Kidney (tissue), 22 donors: ENCODE measurements at regions of chr7 and their contacts with region 1.

Region 1: GRCh38 chr7:121366852-121367431 is 29.2 kb downstream of the FAM3C start:
- DNase-seq: peak in 2 of 5 donors; percentile 38 to 51
- H3K4me3 ChIP-seq: no peak overlapping the region
- H3K27ac ChIP-seq: no peak overlapping the region
- H3K4me1 ChIP-seq: peaks cover 0 to 4% (median 0%) of the 10 kb centered on the region in 3 donors
- H3K27me3 ChIP-seq: no peaks in the 10 kb centered on the region
- CTCF ChIP-seq: peak; percentile 70

Region 2: DNA sequence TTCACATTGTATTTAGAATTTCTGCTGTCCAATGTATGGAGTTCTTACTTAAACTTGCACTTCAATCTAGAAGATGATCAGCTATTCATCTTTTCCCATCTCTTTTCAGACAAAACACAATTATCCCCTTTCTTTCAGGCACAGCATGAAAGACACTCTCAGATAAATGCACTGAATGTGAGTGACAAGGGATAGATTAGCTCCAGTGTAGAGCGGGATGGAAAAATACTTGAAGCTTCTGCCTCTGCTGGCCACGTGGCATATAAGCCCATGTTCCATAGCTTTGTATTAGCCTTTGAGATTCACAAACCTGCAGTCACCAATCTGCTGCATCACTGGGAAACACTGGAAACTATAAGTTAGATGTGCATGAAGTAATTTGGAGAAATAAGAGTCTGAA is 191.3 kb after region 1 on chr7:
- intact Hi-C with region 1: loop called (anchors 5 kb)
- DNase-seq: no peak
- H3K4me3 ChIP-seq: no peak overlapping the region
- H3K27ac ChIP-seq: no peak overlapping the region
- H3K4me1 ChIP-seq: no peaks in the 10 kb centered on the region
- H3K27me3 ChIP-seq: no peaks in the 10 kb centered on the region
- CTCF ChIP-seq: no peak